ENCODE measurements at regions of chr11 and their contacts with region 1.

Region 1: DNA sequence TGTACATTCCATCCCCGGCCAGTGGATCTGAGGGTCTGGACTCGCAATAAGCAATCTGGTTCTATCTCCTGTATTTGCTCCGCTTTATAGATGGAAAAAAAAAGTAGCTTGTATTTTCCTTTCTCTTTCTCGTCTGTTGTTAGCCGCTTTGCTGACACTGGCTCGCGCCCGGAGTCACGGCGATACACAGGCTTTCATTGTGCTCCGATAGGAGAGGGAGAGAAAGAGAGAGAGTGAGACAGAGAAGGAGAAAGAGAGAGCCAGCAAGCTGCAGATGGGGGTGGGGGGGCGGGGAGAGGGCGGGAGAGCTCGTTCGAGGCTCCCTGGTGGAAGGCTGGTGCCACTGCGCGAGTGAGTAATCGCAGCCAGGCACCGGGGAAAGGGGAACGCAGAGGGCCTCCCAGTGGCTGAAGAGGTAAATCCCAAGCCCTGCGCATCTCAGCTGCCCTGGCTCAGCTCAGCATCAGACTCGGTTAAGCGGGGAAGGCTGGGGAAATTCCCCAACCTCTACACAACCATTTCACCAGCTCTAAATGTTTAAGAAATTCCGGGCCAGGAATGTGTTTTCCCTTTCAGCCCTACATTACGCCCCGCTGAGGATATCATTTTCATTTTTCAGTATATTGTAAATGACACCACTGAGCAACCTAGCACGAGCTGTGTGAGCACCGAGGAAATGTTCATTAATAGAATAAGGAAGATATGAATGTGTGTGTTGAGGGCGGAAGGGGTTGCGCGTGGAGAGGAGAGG is at the start of gene MAML2:
- DNase-seq: peak; percentile 89
- ATAC-seq: peak; percentile 96
- H3K4me3 ChIP-seq: peak within 1 kb of the TSS; percentile 49 to 77
- H3K27ac ChIP-seq: peak within 1 kb of the TSS; percentile 48
- H3K4me1 ChIP-seq: peaks cover 34% of the 10 kb centered on the region
- H3K27me3 ChIP-seq: no peaks in the 10 kb centered on the region
- CTCF ChIP-seq: peak; percentile 99
- total RNA-seq, gene MAML2: 2.9 TPM

Region 2: GRCh38 chr11:95835768-95836488 is 507.2 kb before region 1 on chr11:
- CTCF ChIA-PET with region 1: interaction called, 20 read pairs
- POLR2A ChIA-PET with region 1: no interaction called
- in situ Hi-C with region 1: no loop called
- intact Hi-C with region 1: loop called (anchors 5 kb)
- DNase-seq: peak; percentile 58
- ATAC-seq: peak; percentile 96
- H3K4me3 ChIP-seq: no peak overlapping the region
- H3K27ac ChIP-seq: no peak overlapping the region
- H3K4me1 ChIP-seq: 0 out of 2 replicates have a peak, but pooled peaks cover 4% of the 10 kb centered on the region
- H3K27me3 ChIP-seq: no peaks in the 10 kb centered on the region
- CTCF ChIP-seq: peak; percentile 95

Region 3: DNA sequence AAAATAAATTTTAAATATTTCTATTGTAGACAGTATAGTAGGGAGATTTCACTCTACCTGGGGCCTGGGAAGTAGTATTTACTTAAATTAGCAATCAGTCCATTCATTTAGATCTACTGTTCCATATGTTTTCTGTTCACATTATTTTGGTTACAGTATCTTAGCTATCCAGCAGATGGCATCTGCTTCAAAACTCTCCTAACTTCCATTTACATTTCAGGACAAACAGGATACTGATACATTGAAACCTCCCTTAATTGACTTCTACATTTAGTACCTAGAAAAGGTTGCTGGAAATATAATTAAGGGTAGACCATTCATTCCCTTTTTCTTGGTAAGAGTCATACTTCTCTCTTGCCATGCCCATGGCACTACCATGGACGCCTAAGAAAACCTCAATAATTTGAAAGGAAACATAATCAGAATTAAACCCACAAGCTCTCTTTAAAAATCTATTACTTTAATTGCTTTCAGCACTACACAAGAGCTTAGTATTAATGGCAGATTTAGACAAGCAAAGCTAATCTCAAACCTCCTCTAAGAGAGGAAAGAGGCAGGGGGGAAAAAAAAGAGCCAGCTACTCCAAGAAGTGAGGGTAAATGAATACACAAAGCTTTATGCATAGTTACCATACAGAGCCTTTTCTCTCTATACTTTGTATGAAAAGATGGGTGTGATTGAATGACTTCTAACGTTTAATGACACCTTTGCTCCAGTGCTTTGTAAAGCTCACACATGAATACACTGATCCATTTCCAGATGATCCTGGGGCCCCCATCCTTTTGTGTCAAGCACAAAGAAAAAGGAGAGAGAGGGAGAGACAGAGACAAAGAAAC is 288.0 kb before region 1 on chr11:
- CTCF ChIA-PET with region 1: interaction called, 33 read pairs
- POLR2A ChIA-PET with region 1: no interaction called
- in situ Hi-C with region 1: loop called (anchors 10 kb)
- intact Hi-C with region 1: loop called (anchors 1 kb)
- DNase-seq: peak; percentile 36
- ATAC-seq: peak; percentile 75
- H3K4me3 ChIP-seq: no peak overlapping the region
- H3K27ac ChIP-seq: no peak overlapping the region
- H3K4me1 ChIP-seq: no peaks in the 10 kb centered on the region
- H3K27me3 ChIP-seq: no peaks in the 10 kb centered on the region
- CTCF ChIP-seq: peak; percentile 74; the same call in 1 of the 2 replicates

Region 4: DNA sequence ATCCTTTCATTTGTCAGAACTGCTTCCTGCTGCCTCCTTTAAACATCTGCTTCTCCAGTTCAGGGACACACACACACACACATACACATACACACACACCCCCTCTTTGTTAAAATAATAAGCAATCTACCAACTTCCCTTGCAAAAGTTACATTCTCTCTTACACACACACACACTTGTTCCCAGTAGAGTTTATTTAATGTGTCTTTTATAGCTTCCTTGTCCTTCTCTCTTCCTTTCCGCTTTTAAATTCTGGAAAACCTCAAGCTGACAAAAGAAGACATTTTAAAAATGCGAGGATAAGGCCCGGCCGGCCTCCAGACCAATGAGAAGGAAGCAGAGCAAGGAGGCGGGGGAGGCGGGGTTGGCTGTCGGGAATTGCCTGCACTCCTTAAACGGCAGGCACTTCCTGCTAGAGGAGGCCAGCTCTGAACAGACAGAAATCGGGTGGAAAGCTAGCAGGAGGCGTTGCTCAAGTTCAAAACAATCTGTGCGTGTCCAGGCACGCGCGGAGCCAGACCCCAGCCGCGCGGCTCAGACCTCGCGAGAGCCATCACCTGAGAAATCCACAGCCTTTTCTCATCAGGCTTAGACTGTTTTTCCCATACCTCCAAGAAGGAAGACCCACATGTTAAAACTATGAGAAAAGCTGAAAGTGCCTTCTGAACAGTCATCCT is 100.0 kb before region 1 on chr11:
- CTCF ChIA-PET with region 1: interaction called, 8 read pairs
- POLR2A ChIA-PET with region 1: interaction called, 11 read pairs
- in situ Hi-C with region 1: no loop called
- intact Hi-C with region 1: loop called (anchors 5 kb)
- DNase-seq: peak; percentile 90
- ATAC-seq: peak; percentile 97
- H3K4me3 ChIP-seq: peak overlapping the region; percentile 55 to 62
- H3K27ac ChIP-seq: peak overlapping the region; percentile 86
- H3K4me1 ChIP-seq: peaks cover 29% of the 10 kb centered on the region
- H3K27me3 ChIP-seq: no peaks in the 10 kb centered on the region
- CTCF ChIP-seq: no peak

Region 5: GRCh38 chr11:96317571-96317970 is 25.6 kb before region 1 on chr11:
- CTCF ChIA-PET with region 1: no interaction called
- POLR2A ChIA-PET with region 1: no interaction called
- in situ Hi-C with region 1: no loop called
- intact Hi-C with region 1: no loop called
- DNase-seq: no peak
- ATAC-seq: no peak
- H3K4me3 ChIP-seq: no peak overlapping the region
- H3K27ac ChIP-seq: 0 out of 2 replicates have a peak overlapping the region, but pooled peaks have one; percentile 6
- H3K4me1 ChIP-seq: 0 out of 2 replicates have a peak, but pooled peaks cover 3% of the 10 kb centered on the region
- H3K27me3 ChIP-seq: no peaks in the 10 kb centered on the region
- CTCF ChIP-seq: no peak

Region 6: DNA sequence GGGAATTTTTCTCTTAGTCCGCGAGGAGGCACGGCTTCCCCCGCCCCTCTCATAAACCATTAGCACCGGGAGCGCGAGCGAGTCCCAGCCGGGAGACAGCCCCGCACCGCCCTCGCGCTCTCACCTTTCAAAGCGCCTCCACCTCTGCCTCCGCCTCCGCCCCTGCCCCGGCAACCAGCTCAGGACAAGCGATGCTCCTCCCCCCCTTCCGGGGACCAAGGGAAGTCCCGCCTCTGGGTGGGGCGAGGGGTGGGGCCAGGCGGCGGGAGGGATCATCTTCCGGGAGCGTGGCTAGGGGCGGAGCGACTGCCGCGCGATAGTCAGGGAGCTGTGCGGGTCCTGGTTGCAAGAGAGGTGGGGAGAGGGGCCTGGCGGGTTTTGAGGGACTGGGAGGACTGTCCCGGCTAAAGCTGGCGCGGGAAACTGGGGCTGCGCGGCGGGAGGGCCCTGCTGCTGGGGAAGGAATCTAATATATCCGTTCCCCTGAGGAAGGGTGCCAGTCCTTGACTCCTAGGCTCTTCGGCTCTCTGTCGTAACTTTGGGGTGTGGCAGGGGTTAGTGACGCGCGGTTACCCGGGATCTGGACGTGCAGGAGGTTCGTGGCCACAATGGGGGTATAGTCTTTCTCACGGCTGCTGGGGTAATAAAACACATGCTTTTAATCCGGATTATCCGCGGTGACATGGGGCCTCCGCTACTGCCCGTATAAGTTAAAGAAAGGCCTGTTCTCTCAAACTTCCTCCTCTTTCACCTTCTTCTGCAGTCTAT is 46.8 kb after region 1 on chr11 and contains the starts of genes CCDC82 and JRKL:
- CTCF ChIA-PET with region 1: interaction called, 11 read pairs
- POLR2A ChIA-PET with region 1: interaction called, 3 read pairs
- in situ Hi-C with region 1: no loop called
- intact Hi-C with region 1: no loop called
- DNase-seq: peak; percentile 79
- ATAC-seq: peak; percentile 98
- H3K4me3 ChIP-seq: peak within 1 kb of the TSS; percentile 81 to 84
- H3K27ac ChIP-seq: peak within 1 kb of the TSS; percentile 92
- H3K4me1 ChIP-seq: peaks cover 24% of the 10 kb centered on the region
- H3K27me3 ChIP-seq: no peaks in the 10 kb centered on the region
- CTCF ChIP-seq: no peak
- total RNA-seq, gene CCDC82: 25.3 TPM
- total RNA-seq, gene JRKL: 9.6 TPM

Region 7: GRCh38 chr11:96524475-96524874 is 181.3 kb after region 1 on chr11:
- CTCF ChIA-PET with region 1: no interaction called
- POLR2A ChIA-PET with region 1: no interaction called
- in situ Hi-C with region 1: no loop called
- intact Hi-C with region 1: no loop called
- DNase-seq: no peak
- ATAC-seq: no peak
- H3K4me3 ChIP-seq: no peak overlapping the region
- H3K27ac ChIP-seq: no peak overlapping the region
- H3K4me1 ChIP-seq: no peaks in the 10 kb centered on the region
- H3K27me3 ChIP-seq: no peaks in the 10 kb centered on the region
- CTCF ChIP-seq: peak; percentile 2; the same call in 1 of the 2 replicates

Measured in Panc1 (cell line).